ENCODE measurements at regions of chr18 and their contacts with region 1.

Region 1: DNA sequence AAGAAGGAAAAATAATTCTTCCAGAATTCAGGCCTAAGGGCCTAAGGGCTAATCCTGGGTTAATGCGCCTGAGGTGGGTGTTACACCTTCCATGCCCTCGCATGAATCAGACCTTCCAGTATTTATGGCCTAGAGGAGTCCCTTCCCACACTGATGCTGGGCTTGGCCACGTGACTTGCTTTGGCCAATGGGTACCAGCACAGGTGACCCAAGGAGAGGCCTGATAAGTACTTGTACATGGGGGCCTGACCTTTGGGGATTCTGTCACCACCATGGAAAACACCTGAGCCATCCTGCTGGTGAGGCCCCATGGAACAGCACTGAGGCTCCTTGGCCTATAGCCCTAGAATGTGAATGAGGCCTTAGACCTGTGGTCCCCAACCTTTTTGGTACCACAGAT is 79.8 kb downstream of the TNFRSF11A start:
- DNase-seq: no peak
- ATAC-seq: no peak
- H3K4me3 Mint-ChIP-seq: no peak overlapping the region
- H3K27ac Mint-ChIP-seq: no peak overlapping the region
- H3K4me1 Mint-ChIP-seq: peaks cover 6% of the 10 kb centered on the region
- H3K27me3 Mint-ChIP-seq: no peaks in the 10 kb centered on the region
- CTCF ChIP-seq: no peak

Region 2: DNA sequence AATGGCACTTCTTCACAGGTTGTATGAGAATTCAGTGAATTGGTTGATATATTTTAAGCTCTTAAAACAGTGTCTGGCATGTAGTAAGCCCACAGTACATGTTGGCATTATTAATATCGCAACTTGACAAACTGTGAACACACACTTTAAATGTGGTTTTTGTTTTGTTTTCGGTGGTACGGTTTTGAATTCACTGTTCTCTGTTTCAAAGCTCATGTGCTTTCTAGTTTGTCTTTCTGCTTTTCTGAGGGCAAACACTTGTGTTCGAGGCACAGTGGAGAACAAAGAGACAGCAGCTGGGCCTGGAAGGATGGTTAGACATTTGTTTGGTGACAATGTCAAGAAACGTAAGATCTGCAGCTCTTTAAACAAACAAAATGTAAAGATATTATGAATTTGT is 1755.8 kb before region 1 on chr18:
- CTCF ChIA-PET with region 1: no interaction called
- POLR2A ChIA-PET with region 1: interaction called, 13 read pairs
- DNase-seq: no peak
- ATAC-seq: no peak
- H3K4me3 Mint-ChIP-seq: no peak overlapping the region
- H3K27ac Mint-ChIP-seq: no peak overlapping the region
- H3K4me1 Mint-ChIP-seq: peaks cover under 1% of the 10 kb centered on the region
- H3K27me3 Mint-ChIP-seq: no peaks in the 10 kb centered on the region
- CTCF ChIP-seq: no peak

Measured in WTC11 (cell line).